ENCODE measurements at regions of chr17 and their contacts with region 1.

Region 1: DNA sequence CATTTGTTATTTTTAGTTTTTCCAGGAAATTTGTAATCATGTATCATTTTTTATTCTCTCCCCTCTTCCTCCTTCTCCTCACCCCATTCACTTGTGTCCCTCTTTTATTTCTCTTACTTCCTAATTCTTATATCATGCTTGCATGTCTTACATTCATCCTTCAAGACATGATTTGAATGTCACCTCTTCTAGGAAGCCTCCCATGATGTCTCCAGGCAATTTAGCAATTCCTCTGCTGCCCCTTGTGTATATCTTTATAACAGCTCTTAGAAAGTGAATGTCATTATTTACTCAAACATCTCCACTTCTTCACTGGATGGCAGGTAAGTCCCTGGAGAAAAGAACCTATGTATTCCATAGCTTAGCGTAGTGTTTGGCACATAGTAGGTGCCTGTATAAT is 7.8 kb downstream of the HNF1B start:
- DNase-seq: no peak
- ATAC-seq: no peak
- H3K4me3 ChIP-seq: no peak overlapping the region
- H3K4me3 Mint-ChIP-seq: no peak overlapping the region
- H3K27ac ChIP-seq: no peak overlapping the region
- H3K27ac Mint-ChIP-seq: no peak overlapping the region
- H3K4me1 ChIP-seq: peaks cover 4% of the 10 kb centered on the region
- H3K4me1 Mint-ChIP-seq: peaks cover 7% of the 10 kb centered on the region
- H3K27me3 ChIP-seq: peaks cover 39 to 53% of the 10 kb centered on the region in 2 experiments
- H3K27me3 Mint-ChIP-seq: peaks cover 60% of the 10 kb centered on the region
- CTCF ChIP-seq: no peak

Region 2: GRCh38 chr17:37388266-37388665 is 348.8 kb before region 1 on chr17:
- CTCF ChIA-PET with region 1: no interaction called
- POLR2A ChIA-PET with region 1: no interaction called
- intact Hi-C with region 1: no loop called
- DNase-seq: no peak
- ATAC-seq: no peak
- H3K4me3 ChIP-seq: no peak overlapping the region
- H3K4me3 Mint-ChIP-seq: no peak overlapping the region
- H3K27ac ChIP-seq: no peak overlapping the region
- H3K27ac Mint-ChIP-seq: no peak overlapping the region
- H3K4me1 ChIP-seq: no peaks in the 10 kb centered on the region
- H3K4me1 Mint-ChIP-seq: peaks cover 14% of the 10 kb centered on the region
- H3K27me3 ChIP-seq: no peaks in the 10 kb centered on the region
- H3K27me3 Mint-ChIP-seq: no peaks in the 10 kb centered on the region
- CTCF ChIP-seq: no peak

Region 3: DNA sequence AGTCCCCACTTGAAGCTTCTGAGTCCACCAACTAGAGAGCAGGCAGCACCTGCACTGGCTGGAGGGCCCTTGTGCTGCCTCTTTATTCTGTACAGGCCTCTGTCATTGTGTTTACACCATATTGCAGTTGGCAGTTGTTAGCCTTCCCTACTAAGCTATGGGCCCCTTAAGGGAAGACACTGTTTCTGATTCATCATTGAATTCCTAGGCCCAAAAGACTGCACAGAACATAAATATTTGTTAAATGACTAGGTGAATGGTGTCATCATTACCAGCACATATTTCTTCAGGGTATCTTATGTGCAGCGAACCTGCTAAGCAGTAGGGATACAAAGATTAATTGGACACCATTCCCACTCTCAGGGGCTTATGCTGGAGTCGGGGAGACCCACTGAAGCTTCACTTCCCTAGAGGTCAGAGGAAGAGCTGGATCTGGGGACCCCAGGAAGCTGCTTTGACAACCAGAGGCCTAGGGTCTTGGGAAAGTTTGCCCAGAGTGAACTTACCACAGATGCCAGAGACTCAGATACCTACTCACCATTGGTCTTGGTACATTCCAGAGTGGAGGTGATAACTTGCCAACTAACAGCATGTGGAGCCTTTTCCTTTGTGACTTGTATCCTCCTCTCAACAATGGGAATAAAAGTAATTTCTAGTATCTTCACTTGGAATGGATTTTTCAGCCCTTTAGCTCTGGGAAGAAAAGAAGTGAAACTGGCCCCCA is 65.1 kb before region 1 on chr17:
- CTCF ChIA-PET with region 1: no interaction called
- POLR2A ChIA-PET with region 1: no interaction called
- intact Hi-C with region 1: loop called in 1 of 2 experiments (anchors 10 kb)
- DNase-seq: no peak
- ATAC-seq: no peak
- H3K4me3 ChIP-seq: no peak overlapping the region
- H3K4me3 Mint-ChIP-seq: no peak overlapping the region
- H3K27ac ChIP-seq: no peak overlapping the region
- H3K27ac Mint-ChIP-seq: no peak overlapping the region
- H3K4me1 ChIP-seq: no peaks in the 10 kb centered on the region
- H3K4me1 Mint-ChIP-seq: no peaks in the 10 kb centered on the region
- H3K27me3 ChIP-seq: peaks cover 0 to 4% of the 10 kb centered on the region in 2 experiments
- H3K27me3 Mint-ChIP-seq: peaks cover 19% of the 10 kb centered on the region
- CTCF ChIP-seq: no peak

Measured in CD4-positive, alpha-beta T cell (primary cell).